Activated CD4-positive, alpha-beta T cell treated with anti-CD3 and anti-CD28 coated beads, Interleukin-2, amount 10 ng/mL, durations not matched to agents 24 days and 14 days (primary cell): ENCODE measurements at regions of chr1 and their contacts with region 1.

Region 1: DNA sequence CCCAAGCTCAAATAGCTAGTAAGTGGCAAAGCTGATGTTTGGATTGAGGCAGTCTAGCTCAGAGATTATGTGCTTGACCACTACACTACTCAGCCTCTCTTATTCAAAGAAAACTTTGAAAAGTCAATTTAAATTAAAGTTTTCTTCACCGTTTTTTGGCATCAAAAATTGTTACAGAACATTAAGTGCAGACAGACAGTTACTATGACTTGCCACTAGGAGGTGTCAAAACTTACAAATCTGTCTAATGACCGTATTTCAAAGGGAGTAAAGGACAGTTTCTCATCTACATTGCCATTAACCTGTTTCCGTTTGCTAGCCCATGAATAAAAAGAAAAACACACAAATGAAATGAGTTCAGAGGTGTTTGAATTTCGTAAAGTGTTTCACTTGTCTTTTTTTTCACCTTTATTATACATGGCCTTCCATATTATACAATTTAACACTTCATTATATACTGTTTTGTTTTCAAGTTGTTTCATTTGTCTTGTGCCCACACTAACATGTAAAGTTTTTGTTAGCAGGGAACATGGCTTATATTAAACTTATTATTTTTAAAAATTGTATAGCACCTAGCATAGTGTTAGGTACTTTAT is 57.4 kb upstream of the MTF2 start:
- DNase-seq: peak; percentile 75
- H3K4me3 Mint-ChIP-seq: no peak overlapping the region
- H3K27ac Mint-ChIP-seq: no peak overlapping the region
- H3K4me1 Mint-ChIP-seq: peaks cover 5% of the 10 kb centered on the region
- H3K27me3 Mint-ChIP-seq: peaks cover 28% of the 10 kb centered on the region

Region 2: DNA sequence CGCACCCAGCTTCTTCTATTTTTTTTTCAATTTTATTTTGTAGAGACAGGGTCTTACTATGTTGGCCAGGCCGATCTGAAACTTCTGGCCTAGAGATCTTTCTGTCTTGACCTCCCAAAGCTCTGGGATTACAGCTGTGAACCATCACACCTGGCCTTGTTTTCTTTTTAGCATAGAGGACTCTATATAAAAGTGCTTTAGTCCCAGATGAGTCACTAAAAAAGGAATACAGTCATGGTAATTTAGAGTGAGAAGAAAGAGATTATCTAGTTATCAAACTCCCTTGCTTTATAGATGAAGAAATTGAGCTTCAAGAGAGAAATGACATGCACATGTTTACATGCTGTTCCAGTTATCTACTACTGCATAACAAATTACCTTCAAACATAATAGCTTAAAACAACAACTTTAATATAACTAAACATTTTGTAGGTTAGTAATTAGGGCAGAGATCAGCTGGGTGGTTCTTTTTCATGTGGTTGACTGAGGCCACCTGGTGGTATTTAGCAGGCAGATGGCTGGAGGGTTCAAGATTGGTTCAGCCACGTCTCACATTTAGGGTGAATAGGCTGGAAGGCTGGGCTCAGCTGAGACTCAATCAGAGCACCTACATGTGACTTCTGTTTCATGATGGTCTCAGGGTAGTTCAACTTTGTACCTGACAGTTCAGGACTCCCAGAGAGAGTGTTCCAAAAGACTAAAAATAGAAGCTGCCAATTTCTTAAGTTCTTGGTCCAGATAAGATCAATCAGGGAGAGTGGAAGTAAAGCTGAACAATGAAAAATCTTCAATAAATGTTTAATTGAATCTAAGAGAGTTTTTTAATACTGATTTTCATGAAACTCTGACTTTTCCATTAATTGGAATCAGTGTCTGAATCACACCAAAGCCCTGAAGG is 40.5 kb after region 1 on chr1:
- intact Hi-C with region 1: loop called (anchors 1 kb)
- DNase-seq: peak; percentile 80
- H3K4me3 Mint-ChIP-seq: no peak overlapping the region
- H3K27ac Mint-ChIP-seq: no peak overlapping the region
- H3K4me1 Mint-ChIP-seq: peaks cover 2% of the 10 kb centered on the region
- H3K27me3 Mint-ChIP-seq: peaks cover 43% of the 10 kb centered on the region